ENCODE measurements at regions of chr2 and their contacts with region 1.

Region 1: DNA sequence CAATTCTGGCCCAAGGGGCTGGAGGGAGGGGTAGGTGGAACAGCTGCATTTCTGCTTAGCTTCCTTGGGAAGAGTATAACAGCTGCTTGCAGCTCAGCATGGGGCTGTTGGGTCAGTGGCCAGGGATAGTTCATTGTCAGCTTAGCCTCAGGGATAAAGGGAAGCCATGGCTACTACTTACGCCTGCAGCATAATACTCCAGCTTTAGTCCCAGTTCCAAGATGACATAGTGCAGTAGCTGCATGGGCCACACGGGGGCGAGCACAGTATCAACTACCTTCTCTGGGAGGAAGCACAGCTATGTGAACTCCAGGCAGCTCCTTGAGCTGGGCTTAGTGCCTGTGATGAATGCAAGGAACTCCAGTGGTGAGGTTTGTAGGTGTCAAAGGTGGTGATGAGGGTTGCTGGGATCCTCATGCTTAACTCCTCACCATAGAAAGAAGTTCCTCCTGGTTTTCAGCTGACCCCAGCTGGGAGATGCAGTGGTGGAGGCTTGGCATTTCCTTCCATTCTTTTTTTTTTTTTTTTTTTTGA is 35.4 kb upstream of the RHOB start:
- DNase-seq: peak; percentile 87
- ATAC-seq: peak; percentile 97
- H3K4me3 Mint-ChIP-seq: no peak overlapping the region
- H3K27ac Mint-ChIP-seq: no peak overlapping the region
- H3K4me1 Mint-ChIP-seq: no peaks in the 10 kb centered on the region
- H3K27me3 Mint-ChIP-seq: peaks cover 8% of the 10 kb centered on the region

Region 2: DNA sequence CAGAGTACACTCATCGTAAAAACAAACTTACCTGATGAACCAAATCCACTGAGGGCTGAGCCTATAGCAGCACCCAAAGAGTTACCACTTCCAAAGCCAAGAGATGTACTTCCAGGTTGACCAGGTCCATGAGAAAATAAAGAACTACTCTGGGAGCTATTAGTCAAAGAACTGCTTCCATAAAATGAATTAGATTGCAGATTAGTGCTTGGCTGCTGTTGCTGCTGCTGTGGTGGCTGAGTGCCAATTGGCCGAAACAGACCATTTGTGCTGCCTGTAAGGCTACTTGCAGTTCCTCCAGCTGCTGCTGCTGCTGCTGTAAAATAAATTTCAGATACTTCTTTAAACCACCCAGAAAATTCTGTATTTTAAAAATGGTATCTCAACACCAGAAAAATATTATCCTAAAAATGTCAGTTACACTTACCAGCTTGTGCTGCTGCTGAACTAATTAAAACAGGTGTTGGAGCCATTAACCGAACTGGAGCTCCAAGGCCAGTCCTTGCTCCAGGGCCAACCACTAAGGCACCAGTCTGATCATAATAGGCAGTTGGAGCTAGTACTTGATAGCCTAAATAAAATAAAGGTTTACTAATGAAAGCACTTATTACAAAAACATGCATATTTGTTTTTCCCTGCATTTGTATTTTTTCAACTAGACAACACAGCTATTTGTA is 128.4 kb before region 1 on chr2:
- CTCF ChIA-PET with region 1: no interaction called
- POLR2A ChIA-PET with region 1: no interaction called
- intact Hi-C with region 1: no loop called
- DNase-seq: no peak
- ATAC-seq: no peak
- H3K4me3 Mint-ChIP-seq: no peak overlapping the region
- H3K27ac Mint-ChIP-seq: peak overlapping the region; percentile 27
- H3K4me1 Mint-ChIP-seq: peaks cover 4% of the 10 kb centered on the region
- H3K27me3 Mint-ChIP-seq: no peaks in the 10 kb centered on the region

Region 3: GRCh38 chr2:20398956-20399567 is 12.4 kb before region 1 on chr2:
- CTCF ChIA-PET with region 1: interaction called, 23 read pairs
- POLR2A ChIA-PET with region 1: no interaction called
- intact Hi-C with region 1: no loop called
- DNase-seq: no peak
- ATAC-seq: no peak
- H3K4me3 Mint-ChIP-seq: no peak overlapping the region
- H3K27ac Mint-ChIP-seq: no peak overlapping the region
- H3K4me1 Mint-ChIP-seq: no peaks in the 10 kb centered on the region
- H3K27me3 Mint-ChIP-seq: peaks cover 2% of the 10 kb centered on the region

Region 4: GRCh38 chr2:20438334-20439192 is 27.1 kb after region 1 on chr2:
- CTCF ChIA-PET with region 1: interaction called, 15 read pairs
- POLR2A ChIA-PET with region 1: no interaction called
- intact Hi-C with region 1: no loop called
- DNase-seq: no peak
- ATAC-seq: no peak
- H3K4me3 Mint-ChIP-seq: no peak overlapping the region
- H3K27ac Mint-ChIP-seq: no peak overlapping the region
- H3K4me1 Mint-ChIP-seq: no peaks in the 10 kb centered on the region
- H3K27me3 Mint-ChIP-seq: peaks cover 30% of the 10 kb centered on the region

Region 5: GRCh38 chr2:20635675-20636584 is 224.5 kb after region 1 on chr2:
- CTCF ChIA-PET with region 1: interaction called, 18 read pairs
- POLR2A ChIA-PET with region 1: no interaction called
- intact Hi-C with region 1: loop called in 1 of 2 experiments (anchors 1 kb)
- DNase-seq: peak; percentile 78
- ATAC-seq: peak; percentile 95
- H3K4me3 Mint-ChIP-seq: no peak overlapping the region
- H3K27ac Mint-ChIP-seq: no peak overlapping the region
- H3K4me1 Mint-ChIP-seq: no peaks in the 10 kb centered on the region
- H3K27me3 Mint-ChIP-seq: no peaks in the 10 kb centered on the region

Region 6: DNA sequence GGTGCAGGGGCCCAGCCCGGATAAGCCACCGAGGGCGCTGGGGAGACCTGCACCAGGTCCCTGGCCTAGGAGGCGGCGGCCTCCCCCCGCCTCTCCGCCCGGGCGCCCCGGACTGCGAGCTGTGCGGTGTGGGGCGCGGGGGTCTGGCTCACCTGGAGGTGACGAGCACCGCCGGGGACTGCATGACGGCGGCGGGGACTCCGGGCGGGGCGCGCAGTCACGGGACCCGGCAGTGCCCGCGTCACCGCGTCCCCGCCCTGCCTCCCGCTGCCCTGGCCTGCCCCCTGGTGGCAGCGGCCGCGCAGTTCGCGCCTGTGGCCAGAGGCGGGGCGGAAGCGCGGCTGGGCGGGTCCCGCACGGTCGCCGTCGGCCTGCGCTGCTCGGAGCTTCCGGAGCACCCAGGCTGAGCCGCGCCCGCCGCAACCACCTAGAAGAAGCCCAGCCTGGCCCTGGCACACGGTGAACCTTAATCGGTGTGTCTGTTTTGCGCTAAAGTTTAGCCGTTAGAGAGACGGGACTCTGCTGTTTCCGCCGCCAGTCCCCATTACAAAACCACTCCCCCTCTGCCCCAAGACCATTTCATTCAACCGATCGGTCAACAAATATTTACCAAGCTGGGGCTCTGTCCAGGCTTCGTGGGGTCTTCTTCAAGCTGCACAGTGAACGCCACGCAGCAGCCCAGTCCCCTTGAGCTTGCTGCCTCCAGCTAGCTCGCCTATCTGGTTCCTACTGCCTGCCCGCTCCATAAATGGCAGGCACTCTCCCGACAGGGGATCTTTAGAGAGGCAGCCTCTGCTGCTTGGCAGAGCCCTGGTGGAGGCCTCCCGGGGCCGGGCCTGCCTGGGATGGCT is 239.7 kb after region 1 on chr2 and contains the start of gene HS1BP3:
- CTCF ChIA-PET with region 1: interaction called, 11 read pairs
- POLR2A ChIA-PET with region 1: interaction called, 3 read pairs
- intact Hi-C with region 1: no loop called
- DNase-seq: peak; percentile 92
- ATAC-seq: peak; percentile 97
- H3K4me3 Mint-ChIP-seq: peak within 1 kb of the TSS; percentile 78
- H3K27ac Mint-ChIP-seq: peak within 1 kb of the TSS; percentile 86
- H3K4me1 Mint-ChIP-seq: peaks cover 22% of the 10 kb centered on the region
- H3K27me3 Mint-ChIP-seq: no peaks in the 10 kb centered on the region
- total RNA-seq, gene HS1BP3: 6.2 to 7.1 TPM